Activated CD8-positive, alpha-beta T cell treated with anti-CD3 and anti-CD28 coated beads, Interleukin-2, amount 10 ng/mL, durations not matched to agents 7 days and 5 days (primary cell): ENCODE measurements at regions of chr17 and their contacts with region 1.

Region 1: GRCh38 chr17:17739388-17740066 is 58.3 kb downstream of the RAI1 start:
- DNase-seq: no peak
- ATAC-seq: no peak
- H3K4me3 Mint-ChIP-seq: no peak overlapping the region
- H3K27ac Mint-ChIP-seq: no peak overlapping the region
- H3K4me1 Mint-ChIP-seq: peaks cover 44% of the 10 kb centered on the region
- H3K27me3 Mint-ChIP-seq: no peaks in the 10 kb centered on the region

Region 2: GRCh38 chr17:17636272-17636885 is 103.1 kb before region 1 on chr17:
- CTCF ChIA-PET with region 1: no interaction called
- POLR2A ChIA-PET with region 1: no interaction called
- DNase-seq: no peak
- ATAC-seq: no peak
- H3K4me3 Mint-ChIP-seq: no peak overlapping the region
- H3K27ac Mint-ChIP-seq: no peak overlapping the region
- H3K4me1 Mint-ChIP-seq: no peaks in the 10 kb centered on the region
- H3K27me3 Mint-ChIP-seq: peaks cover 3% of the 10 kb centered on the region

Region 3: DNA sequence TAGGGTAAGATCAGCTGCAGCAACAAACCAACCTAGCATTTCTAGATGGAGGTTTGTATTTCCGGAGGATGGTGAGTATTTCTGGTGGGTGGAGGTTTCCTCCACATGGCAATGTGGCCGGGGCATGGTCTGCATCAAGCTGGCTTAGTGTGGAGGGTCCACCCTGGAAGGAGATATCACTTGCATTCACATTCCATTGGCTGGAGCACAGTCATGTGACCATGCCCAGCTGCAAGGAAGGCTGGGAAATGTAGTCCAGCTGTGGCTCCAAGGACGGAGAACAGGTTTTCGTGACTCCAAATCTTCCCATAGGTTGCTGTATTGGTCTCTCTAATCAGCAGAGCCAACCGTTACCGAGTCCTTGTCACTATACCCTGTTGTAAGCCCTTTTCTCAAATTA is 10.4 kb after region 1 on chr17:
- CTCF ChIA-PET with region 1: interaction called, 6 read pairs
- POLR2A ChIA-PET with region 1: interaction called, 12 read pairs
- DNase-seq: peak; percentile 83
- ATAC-seq: peak; percentile 8
- H3K4me3 Mint-ChIP-seq: peak overlapping the region; percentile 20
- H3K27ac Mint-ChIP-seq: peak overlapping the region; percentile 95
- H3K4me1 Mint-ChIP-seq: peaks cover 71% of the 10 kb centered on the region
- H3K27me3 Mint-ChIP-seq: no peaks in the 10 kb centered on the region